ENCODE measurements at regions of chr19 and their contacts with region 1.

Region 1: GRCh38 chr19:15418588-15419412 is at the start of gene AKAP8L:
- DNase-seq: peak; percentile 99 to 100
- H3K4me3 ChIP-seq: peak within 1 kb of the TSS; percentile 80 to 99 (median 98)
- H3K27ac ChIP-seq: peak within 1 kb of the TSS; percentile 88 to 94 (median 92)
- H3K4me1 ChIP-seq: peaks cover 50 to 79% (median 72%) of the 10 kb centered on the region in 4 donors
- H3K27me3 ChIP-seq: no peaks in the 10 kb centered on the region
- CTCF ChIP-seq: peak in 5 of 7 experiments; percentile 42 to 79 (median 54)
- EP300 ChIP-seq: peak; percentile 23
- POLR2A ChIP-seq: peak in 1 of 4 donors; percentile 79
- total RNA-seq, gene AKAP8L: 67.8 to 320 (median 120) TPM

Region 2: GRCh38 chr19:15379083-15379995 is 39.5 kb before region 1 on chr19 and contains the start of gene AKAP8:
- intact Hi-C with region 1: loop called (anchors 5 kb)
- DNase-seq: peak; percentile 99 to 100
- H3K4me3 ChIP-seq: peak within 1 kb of the TSS; percentile 78 to 98 (median 93)
- H3K27ac ChIP-seq: peak within 1 kb of the TSS; percentile 90 to 100 (median 98)
- H3K4me1 ChIP-seq: peaks cover 41 to 54% (median 51%) of the 10 kb centered on the region in 4 donors
- H3K27me3 ChIP-seq: no peaks in the 10 kb centered on the region
- CTCF ChIP-seq: no peak
- EP300 ChIP-seq: no peak
- POLR2A ChIP-seq: peak in 2 of 4 donors; percentile 35 to 58
- total RNA-seq, gene AKAP8: 19.8 to 38.7 (median 23.7) TPM